ENCODE measurements at regions of chr7 and their contacts with region 1.

Region 1: GRCh38 chr7:1065263-1066260 is 21.2 kb downstream of the GPR146 start:
- DNase-seq: peak; percentile 99
- H3K4me3 ChIP-seq: no peak overlapping the region; a peak in 1 of 4 replicates
- H3K27ac ChIP-seq: no peak overlapping the region
- H3K4me1 ChIP-seq: peaks cover 0 to 9% of the 10 kb centered on the region in 2 experiments; a peak in 1 of 4 replicates
- H3K27me3 ChIP-seq: no peaks in the 10 kb centered on the region
- CTCF ChIP-seq: peak; percentile 87
- EP300 ChIP-seq: no peak
- RAD21 ChIP-seq: peak; percentile 93

Region 2: DNA sequence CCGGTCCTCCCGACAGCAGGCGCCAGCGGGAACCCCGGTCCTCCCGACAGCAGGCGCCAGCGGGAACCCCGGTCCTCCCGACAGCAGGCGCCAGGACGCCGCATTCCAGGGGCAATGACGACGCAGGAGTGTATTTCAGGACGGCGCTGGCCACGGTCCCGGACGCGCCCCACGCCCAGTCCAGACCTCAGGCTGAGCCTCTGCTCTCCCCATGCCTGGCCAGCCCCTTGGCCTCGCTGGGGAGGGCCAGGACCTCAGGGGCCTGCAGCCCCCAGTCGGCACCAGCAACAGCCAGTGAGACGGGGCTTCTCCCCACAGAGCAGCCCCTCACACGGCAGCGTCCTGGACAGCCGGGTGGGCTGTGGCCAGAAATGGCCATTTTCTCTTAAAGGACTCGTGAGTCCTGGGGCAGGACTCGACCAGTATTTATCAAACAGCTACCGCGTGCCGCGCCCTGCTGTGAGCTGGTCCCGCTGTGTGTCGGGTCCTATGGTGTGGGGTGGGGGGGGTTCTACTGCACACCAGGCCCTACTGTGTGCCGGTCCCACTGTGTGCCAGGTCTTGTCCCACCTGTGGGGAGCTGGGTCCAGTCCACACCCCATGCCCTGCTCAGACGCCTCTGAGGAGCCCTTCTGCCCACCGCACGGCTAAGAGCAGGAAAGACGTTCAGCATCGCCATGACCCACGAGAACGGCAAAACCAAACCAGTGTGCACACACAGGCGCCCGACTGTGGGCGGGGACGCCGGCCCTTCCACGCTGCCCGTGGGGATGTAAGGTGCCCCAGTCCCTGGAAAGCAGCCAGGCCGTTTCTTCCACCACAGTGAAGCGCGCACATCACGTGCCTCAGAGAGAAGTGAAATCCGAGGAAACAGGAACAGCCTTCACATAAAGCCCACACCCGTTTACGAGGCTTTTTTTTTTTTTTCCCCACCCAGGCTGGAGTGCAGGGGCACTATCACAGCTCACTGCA is 155.9 kb before region 1 on chr7:
- CTCF ChIA-PET with region 1: interaction called, 12 read pairs
- POLR2A ChIA-PET with region 1: no interaction called
- DNase-seq: peak; percentile 82
- H3K4me3 ChIP-seq: peak overlapping the region in 1 of 2 experiments; percentile 37; a peak in 2 of 4 replicates
- H3K27ac ChIP-seq: no peak overlapping the region
- H3K4me1 ChIP-seq: peaks cover 4% of the 10 kb centered on the region in 2 experiments; a peak in 3 of 4 replicates
- H3K27me3 ChIP-seq: no peaks in the 10 kb centered on the region
- CTCF ChIP-seq: no peak
- EP300 ChIP-seq: no peak
- RAD21 ChIP-seq: no peak

Region 3: DNA sequence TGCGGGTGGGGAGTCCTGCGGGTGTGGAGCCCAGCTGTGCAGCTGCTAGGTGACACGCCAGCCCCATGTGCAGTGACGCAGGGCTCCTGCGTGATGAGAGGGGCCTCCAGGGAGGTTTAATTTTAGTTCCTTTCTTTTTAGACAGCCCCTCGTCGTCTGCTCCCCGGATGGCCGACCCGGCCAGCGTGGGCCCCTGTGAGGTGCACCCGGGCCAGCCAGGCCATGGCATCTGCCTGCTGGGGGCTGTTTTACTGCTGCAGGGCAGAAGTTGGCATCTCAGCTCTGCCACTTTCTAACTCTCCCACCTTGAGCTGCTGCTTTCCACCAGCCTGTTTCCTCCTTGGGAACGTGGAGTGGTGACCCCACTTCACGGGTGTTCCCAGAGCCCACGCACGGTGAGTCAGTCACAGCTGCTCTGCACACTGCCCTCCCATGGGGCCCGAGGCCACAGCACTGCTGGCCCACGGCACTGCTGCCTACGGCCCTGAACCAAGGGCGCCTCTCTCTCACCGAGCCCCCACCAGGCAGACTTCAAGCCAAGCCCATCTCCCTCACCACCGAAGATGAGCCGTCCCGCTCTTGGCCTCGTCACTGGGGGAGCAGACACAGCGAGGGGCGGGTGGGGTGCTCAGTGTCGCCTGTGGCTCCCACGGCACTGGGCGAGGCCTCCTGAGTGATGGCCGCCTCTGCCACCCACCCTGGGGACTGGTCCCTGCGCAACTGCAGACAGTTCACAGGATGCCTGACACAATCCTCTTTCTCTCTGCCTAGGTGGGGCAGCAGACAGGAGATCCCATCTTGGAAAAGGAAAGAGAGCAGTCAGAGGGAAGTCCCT is 61.3 kb before region 1 on chr7:
- CTCF ChIA-PET with region 1: interaction called, 756 read pairs
- POLR2A ChIA-PET with region 1: no interaction called
- DNase-seq: no peak
- H3K4me3 ChIP-seq: no peak overlapping the region
- H3K27ac ChIP-seq: no peak overlapping the region
- H3K4me1 ChIP-seq: no peaks in the 10 kb centered on the region; a peak in 1 of 4 replicates
- H3K27me3 ChIP-seq: no peaks in the 10 kb centered on the region
- CTCF ChIP-seq: no peak
- EP300 ChIP-seq: no peak
- RAD21 ChIP-seq: no peak

Region 4: DNA sequence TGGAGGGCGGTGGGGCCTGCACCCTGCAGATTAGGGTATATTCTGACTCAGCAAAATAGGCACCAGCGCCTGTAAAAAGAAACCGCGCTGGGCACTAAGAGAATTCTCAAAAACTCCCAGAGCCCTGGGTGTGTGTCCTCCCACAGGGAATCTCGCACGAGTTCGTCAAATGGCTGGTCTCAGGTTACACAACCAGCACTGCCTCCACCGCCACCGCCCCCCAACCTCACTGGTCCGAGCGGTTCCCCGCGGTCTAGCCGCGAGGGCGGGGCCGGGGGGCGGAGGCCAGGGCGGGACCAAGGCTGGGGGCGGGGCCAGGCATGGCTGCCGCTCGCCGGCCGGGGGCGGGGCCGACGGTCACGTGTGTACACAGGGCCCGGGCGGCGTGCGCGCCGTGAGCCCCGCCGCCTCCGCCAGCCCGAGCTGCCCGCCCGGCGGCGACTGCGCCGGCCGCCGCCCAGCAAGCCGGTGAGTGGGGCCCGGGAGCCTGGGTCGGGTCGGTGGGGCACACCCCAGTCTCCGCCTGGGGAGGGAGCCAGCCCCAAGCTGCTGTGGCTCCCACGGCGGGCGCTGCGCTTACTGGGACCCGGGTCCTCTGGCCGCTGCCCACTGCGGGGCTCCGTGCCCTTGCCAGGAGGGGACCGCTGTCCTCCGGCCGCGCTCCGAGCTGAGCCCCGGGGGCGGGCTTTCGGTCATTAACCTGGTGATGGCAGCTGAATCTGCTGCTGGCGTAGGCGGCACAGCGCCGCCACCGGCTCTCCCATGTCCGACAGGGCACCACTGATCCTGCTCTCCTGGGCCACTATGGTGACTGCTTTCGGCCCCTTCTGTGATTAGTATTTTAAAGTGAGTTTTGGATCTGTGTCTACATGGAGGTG is 21.1 kb before region 1 on chr7 and contains the start of gene GPR146:
- CTCF ChIA-PET with region 1: interaction called, 168 read pairs
- POLR2A ChIA-PET with region 1: no interaction called
- DNase-seq: peak; percentile 100
- H3K4me3 ChIP-seq: peak within 1 kb of the TSS; percentile 78 to 79
- H3K27ac ChIP-seq: peak within 1 kb of the TSS; percentile 66 to 81
- H3K4me1 ChIP-seq: peaks cover 16 to 74% of the 10 kb centered on the region in 2 experiments
- H3K27me3 ChIP-seq: no peaks in the 10 kb centered on the region
- CTCF ChIP-seq: peak; percentile 84
- EP300 ChIP-seq: no peak
- RAD21 ChIP-seq: peak; percentile 48
- polyA plus RNA-seq, gene GPR146: 1.4 and 2.0 TPM in 2 replicates

Region 5: GRCh38 chr7:1096156-1097119 is 30.9 kb after region 1 on chr7:
- CTCF ChIA-PET with region 1: interaction called, 22 read pairs
- POLR2A ChIA-PET with region 1: no interaction called
- DNase-seq: peak; percentile 88
- H3K4me3 ChIP-seq: no peak overlapping the region; a peak in 1 of 4 replicates
- H3K27ac ChIP-seq: peak overlapping the region in 1 of 2 experiments; percentile 71; a peak in 2 of 4 replicates
- H3K4me1 ChIP-seq: peaks cover 12 to 44% of the 10 kb centered on the region in 2 experiments; a peak in 3 of 4 replicates
- H3K27me3 ChIP-seq: no peaks in the 10 kb centered on the region
- CTCF ChIP-seq: no peak
- EP300 ChIP-seq: no peak
- RAD21 ChIP-seq: no peak

Region 6: GRCh38 chr7:1144269-1144771 is 78.8 kb after region 1 on chr7:
- CTCF ChIA-PET with region 1: interaction called, 33 read pairs
- POLR2A ChIA-PET with region 1: no interaction called
- DNase-seq: peak; percentile 92
- H3K4me3 ChIP-seq: peak overlapping the region in 1 of 2 experiments; percentile 20; a peak in 3 of 4 replicates
- H3K27ac ChIP-seq: peak overlapping the region in 1 of 2 experiments; percentile 41; a peak in 2 of 4 replicates
- H3K4me1 ChIP-seq: peaks cover 0 to 22% of the 10 kb centered on the region in 2 experiments; a peak in 2 of 4 replicates
- H3K27me3 ChIP-seq: no peaks in the 10 kb centered on the region
- CTCF ChIP-seq: peak; percentile 70
- EP300 ChIP-seq: no peak; a peak in 1 of 4 replicates
- RAD21 ChIP-seq: peak; percentile 99

Measured in SK-N-SH (cell line).